Activated CD4-positive, alpha-beta T cell treated with anti-CD3 and anti-CD28 coated beads for 36 hours (primary cell): ENCODE measurements at regions of chr1 and their contacts with region 1.

Region 1: GRCh38 chr1:150925816-150926741 is at the start of gene SETDB1:
- DNase-seq: peak; percentile 97
- ATAC-seq: peak; percentile 89
- H3K4me3 Mint-ChIP-seq: peak within 1 kb of the TSS; percentile 89
- H3K27ac Mint-ChIP-seq: peak within 1 kb of the TSS; percentile 96
- H3K4me1 Mint-ChIP-seq: peaks cover 29% of the 10 kb centered on the region
- H3K27me3 Mint-ChIP-seq: no peaks in the 10 kb centered on the region
- total RNA-seq, gene SETDB1: 48.8 to 52.7 TPM

Region 2: DNA sequence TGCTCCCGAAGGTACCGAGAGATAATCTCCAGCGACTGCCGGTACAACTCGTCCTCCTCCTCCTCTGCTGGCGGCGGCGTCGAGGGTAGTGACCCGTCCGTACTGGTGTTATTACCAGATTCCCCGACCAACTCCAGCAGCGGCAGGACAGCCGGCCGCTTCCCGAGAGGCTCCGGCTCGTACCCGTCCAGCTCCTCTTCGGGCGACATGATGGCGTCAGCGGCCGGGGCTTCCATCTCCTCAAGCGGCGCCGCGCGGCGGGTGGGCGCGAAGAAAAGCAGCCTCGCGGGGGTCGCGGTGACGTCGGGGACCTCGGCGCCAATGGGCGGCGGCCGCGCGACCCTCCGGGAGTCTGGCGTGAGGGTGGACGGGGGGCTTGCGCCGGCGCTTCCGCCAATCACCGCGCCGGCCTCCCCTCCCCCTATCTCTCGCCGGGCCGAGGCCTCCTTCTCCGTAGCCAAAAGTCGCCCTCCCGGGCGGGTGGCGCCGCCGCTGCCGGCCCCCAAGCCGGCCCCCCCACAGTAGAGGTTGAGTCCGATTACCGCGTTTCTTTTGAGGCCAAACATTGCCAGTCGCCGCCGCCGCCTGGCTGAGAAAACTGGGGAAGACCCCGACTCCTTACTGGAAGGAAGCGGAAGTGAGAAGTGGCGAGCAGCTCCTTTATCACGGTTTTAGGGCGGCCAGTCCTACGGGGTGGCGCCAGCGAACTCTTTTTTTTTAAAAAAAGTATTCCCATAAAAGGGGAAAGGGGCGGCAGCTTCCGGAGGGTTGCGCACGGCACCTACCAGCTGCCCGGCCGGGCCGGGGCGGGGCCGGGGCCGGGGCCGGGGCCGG is 346.9 kb before region 1 on chr1 and contains the start of gene MCL1:
- CTCF ChIA-PET with region 1: interaction called, 4 read pairs
- POLR2A ChIA-PET with region 1: no interaction called
- intact Hi-C with region 1: loop called in 1 of 2 experiments (anchors 5 kb)
- DNase-seq: peak; percentile 94
- ATAC-seq: peak; percentile 81
- H3K4me3 Mint-ChIP-seq: peak within 1 kb of the TSS; percentile 95
- H3K27ac Mint-ChIP-seq: peak within 1 kb of the TSS; percentile 97
- H3K4me1 Mint-ChIP-seq: peaks cover 24% of the 10 kb centered on the region
- H3K27me3 Mint-ChIP-seq: no peaks in the 10 kb centered on the region
- total RNA-seq, gene MCL1: 185 to 265 TPM

Region 3: DNA sequence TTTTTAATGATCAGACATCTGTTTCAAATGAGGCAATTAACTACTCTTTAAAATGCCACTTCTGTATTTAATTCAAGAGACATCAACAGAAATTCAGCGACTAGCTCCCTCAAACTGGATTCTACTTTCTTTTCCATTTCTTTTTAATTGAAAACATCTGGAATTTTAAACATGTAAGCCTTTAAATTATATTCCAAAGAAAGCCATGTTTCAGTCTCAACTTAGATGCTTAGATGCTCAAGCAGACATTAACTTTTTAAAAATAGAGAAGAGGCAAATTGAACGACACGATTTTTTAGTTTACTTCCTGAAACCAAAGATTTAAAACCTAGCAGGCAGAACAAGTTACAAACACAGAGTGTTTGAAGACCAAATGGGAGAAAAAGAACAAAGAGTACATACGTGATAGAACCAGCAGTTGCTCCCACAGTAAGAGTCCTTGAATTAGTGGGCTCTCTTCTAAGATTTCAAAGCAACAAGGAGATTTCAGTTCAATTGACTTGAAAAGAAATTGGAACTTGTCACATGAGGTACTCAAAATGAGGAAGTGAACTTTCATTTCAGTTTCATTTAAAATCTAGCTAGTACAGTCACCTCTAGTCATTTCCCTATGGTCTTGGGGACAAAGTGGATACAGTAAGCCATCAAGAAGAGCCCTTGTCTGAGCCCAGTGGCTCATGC is 160.6 kb before region 1 on chr1 and contains the start of gene CTSS:
- CTCF ChIA-PET with region 1: interaction called, 5 read pairs
- POLR2A ChIA-PET with region 1: interaction called, 8 read pairs
- intact Hi-C with region 1: loop called (anchors 1 to 2 kb)
- DNase-seq: no peak
- ATAC-seq: peak; percentile 94
- H3K4me3 Mint-ChIP-seq: peak within 1 kb of the TSS; percentile 80
- H3K27ac Mint-ChIP-seq: peak within 1 kb of the TSS; percentile 91
- H3K4me1 Mint-ChIP-seq: peaks cover 33% of the 10 kb centered on the region
- H3K27me3 Mint-ChIP-seq: no peaks in the 10 kb centered on the region
- total RNA-seq, gene CTSS: 31.4 to 44.8 TPM

Region 4: DNA sequence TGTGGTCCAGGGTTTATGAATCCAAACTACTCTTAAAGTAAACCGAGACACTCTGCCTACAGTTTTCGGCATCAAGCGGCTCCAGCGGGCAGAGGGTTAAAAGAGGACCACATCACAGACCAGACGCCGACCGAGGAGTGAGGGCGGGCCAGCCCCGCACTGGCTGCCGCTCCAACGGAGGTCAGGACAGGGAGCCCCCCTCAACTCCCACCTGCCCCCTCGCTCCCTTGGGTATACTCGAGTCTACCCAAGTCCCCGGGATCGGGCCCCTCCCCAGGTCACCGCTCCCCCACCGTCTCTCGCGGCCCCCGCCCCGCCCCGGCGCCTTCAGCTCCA is 50.0 kb before region 1 on chr1:
- CTCF ChIA-PET with region 1: no interaction called
- POLR2A ChIA-PET with region 1: interaction called, 3 read pairs
- intact Hi-C with region 1: loop called (anchors 1 kb)
- DNase-seq: no peak
- ATAC-seq: peak; percentile 37
- H3K4me3 Mint-ChIP-seq: peak overlapping the region; percentile 88
- H3K27ac Mint-ChIP-seq: peak overlapping the region; percentile 95
- H3K4me1 Mint-ChIP-seq: peaks cover 25% of the 10 kb centered on the region
- H3K27me3 Mint-ChIP-seq: no peaks in the 10 kb centered on the region

Region 5: DNA sequence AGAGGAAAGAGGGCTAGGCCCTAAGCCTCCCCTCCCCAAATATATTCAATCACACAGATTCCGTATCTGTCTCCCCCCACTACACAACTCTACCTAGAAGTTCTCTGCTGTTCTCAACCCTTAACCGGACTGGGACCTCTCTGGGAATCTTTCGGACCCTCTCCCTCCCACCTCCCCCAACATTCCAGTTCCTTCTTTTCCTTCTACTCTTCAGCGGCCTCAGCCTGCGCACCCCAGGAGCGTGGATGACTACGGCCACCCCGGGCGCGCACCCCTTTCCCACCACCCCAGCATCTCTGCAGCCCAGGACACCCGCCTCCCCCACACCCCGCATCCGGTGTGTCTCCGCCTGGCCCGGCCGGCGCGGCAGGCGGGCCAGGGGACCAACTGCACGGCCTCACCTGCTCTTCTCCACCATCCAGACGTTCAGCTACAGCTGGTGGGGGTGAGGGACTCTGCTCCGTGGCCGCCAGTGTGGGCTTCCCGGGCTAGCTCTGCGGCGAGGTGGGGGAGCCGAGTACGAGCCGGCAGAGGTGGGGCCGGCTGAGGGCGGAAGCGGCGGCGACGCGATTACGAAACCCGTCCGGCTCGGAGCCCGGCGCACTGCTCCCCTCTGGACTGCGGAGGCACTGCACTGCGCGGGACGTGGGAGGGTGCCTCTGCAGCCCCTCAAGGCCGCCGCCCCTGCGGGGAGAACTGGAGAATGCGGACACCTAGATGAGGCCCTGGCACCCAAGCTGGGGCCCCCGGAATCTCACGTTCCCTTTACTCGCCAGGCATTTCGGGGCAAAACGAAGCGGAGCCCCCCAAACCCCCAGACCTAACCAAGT is 133.2 kb after region 1 on chr1 and contains the start of gene CDC42SE1:
- CTCF ChIA-PET with region 1: no interaction called
- POLR2A ChIA-PET with region 1: no interaction called
- intact Hi-C with region 1: loop called in 1 of 2 experiments (anchors 2 kb)
- DNase-seq: peak; percentile 92
- ATAC-seq: peak; percentile 75
- H3K4me3 Mint-ChIP-seq: peak within 1 kb of the TSS; percentile 93
- H3K27ac Mint-ChIP-seq: peak within 1 kb of the TSS; percentile 98
- H3K4me1 Mint-ChIP-seq: peaks cover 54% of the 10 kb centered on the region
- H3K27me3 Mint-ChIP-seq: no peaks in the 10 kb centered on the region
- total RNA-seq, gene CDC42SE1: 95.4 to 101 TPM